ENCODE measurements at regions of chr17 and their contacts with region 1.

Region 1: GRCh38 chr17:39894681-39895376 is 23.6 kb downstream of the GSDMB start:
- DNase-seq: peak; percentile 63
- H3K4me3 Mint-ChIP-seq: no peak overlapping the region
- H3K27ac Mint-ChIP-seq: no peak overlapping the region
- H3K4me1 Mint-ChIP-seq: peaks cover 23% of the 10 kb centered on the region
- H3K27me3 Mint-ChIP-seq: peaks cover 15% of the 10 kb centered on the region
- CTCF ChIP-seq: no peak

Region 2: GRCh38 chr17:40179923-40180659 is 285.3 kb after region 1 on chr17:
- CTCF ChIA-PET with region 1: no interaction called
- intact Hi-C with region 1: no loop called
- DNase-seq: peak; percentile 79
- H3K4me3 Mint-ChIP-seq: peak overlapping the region; percentile 0
- H3K27ac Mint-ChIP-seq: peak overlapping the region; percentile 11
- H3K4me1 Mint-ChIP-seq: peaks cover 56% of the 10 kb centered on the region
- H3K27me3 Mint-ChIP-seq: no peaks in the 10 kb centered on the region
- CTCF ChIP-seq: no peak

Region 3: DNA sequence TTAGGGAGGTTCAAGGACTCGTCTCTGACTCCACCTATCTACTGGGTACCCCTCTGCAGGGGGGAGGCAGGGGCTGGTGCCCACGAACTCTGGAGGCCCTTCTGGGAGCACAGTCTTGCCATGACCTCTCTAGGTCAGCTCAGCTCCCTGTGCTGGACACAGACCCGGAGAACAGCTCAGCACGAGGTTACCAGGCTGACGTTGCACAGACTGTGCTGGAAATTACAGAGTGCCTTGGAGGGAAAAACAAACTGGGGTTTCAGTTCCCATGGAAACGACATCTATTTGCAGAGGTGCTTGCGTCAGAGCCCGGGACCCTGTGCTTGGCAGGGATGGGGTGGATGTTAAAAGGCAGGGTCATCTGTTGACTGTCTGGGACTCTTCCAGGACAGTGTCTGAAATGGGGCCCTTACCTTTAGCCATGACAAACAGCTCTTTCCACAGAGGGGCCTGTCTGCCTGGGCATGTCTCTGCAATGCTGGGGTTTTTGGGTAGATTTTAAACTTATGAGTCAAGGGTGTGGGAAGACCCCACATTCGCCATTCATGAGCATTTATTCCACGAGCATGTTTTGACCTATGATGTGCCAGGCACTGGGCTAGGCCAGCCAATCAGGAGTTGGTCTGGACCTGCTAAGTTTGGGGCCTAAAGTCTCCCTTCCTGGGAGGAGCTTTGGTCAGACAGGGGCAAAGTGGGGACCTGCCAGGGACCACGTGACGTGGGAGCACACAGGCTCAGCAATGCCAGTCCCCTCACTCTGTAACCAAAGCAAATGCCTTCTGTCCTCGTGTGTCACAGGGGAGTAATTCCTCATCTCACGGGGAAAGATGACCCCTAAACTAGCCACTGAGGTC is 648.0 kb after region 1 on chr17:
- CTCF ChIA-PET with region 1: interaction called, 5 read pairs
- intact Hi-C with region 1: loop called (anchors 1 kb)
- DNase-seq: no peak
- H3K4me3 Mint-ChIP-seq: no peak overlapping the region
- H3K27ac Mint-ChIP-seq: no peak overlapping the region
- H3K4me1 Mint-ChIP-seq: no peaks in the 10 kb centered on the region
- H3K27me3 Mint-ChIP-seq: peaks cover 50% of the 10 kb centered on the region
- CTCF ChIP-seq: no peak

Region 4: GRCh38 chr17:40791787-40792436 is 897.1 kb after region 1 on chr17:
- CTCF ChIA-PET with region 1: interaction called, 4 read pairs
- intact Hi-C with region 1: loop called (anchors 2 kb)
- DNase-seq: peak; percentile 59
- H3K4me3 Mint-ChIP-seq: no peak overlapping the region
- H3K27ac Mint-ChIP-seq: no peak overlapping the region
- H3K4me1 Mint-ChIP-seq: no peaks in the 10 kb centered on the region
- H3K27me3 Mint-ChIP-seq: peaks cover 40% of the 10 kb centered on the region
- CTCF ChIP-seq: peak; percentile 100